ENCODE measurements at regions of chr16 and their contacts with region 1.

Region 1: GRCh38 chr16:64051824-64052223 is 1070.0 kb downstream of the CDH11 start:
- DNase-seq: peak in 1 of 2 donors; percentile 1
- H3K4me3 ChIP-seq: no peak overlapping the region
- H3K27ac ChIP-seq: no peak overlapping the region
- H3K4me1 ChIP-seq: no peaks in the 10 kb centered on the region
- H3K27me3 ChIP-seq: no peaks in the 10 kb centered on the region
- CTCF ChIP-seq: peak in 5 of 6 experiments; percentile 9 to 74 (median 58)
- POLR2A ChIP-seq: no peak

Region 2: GRCh38 chr16:63361032-63361624 is 690.7 kb before region 1 on chr16:
- intact Hi-C with region 1: loop called (anchors 5 kb)
- DNase-seq: no peak
- H3K4me3 ChIP-seq: no peak overlapping the region
- H3K27ac ChIP-seq: no peak overlapping the region
- H3K4me1 ChIP-seq: no peaks in the 10 kb centered on the region
- H3K27me3 ChIP-seq: no peaks in the 10 kb centered on the region
- CTCF ChIP-seq: peak in 4 of 6 experiments; percentile 25 to 74 (median 54)
- POLR2A ChIP-seq: no peak